Posterior vena cava (tissue), 2 donors: ENCODE measurements at regions of chrX and their contacts with region 1.

Region 1: GRCh38 chrX:109714340-109714958 is 18.6 kb downstream of the ACSL4 start:
- DNase-seq: no peak

Region 2: GRCh38 chrX:109782994-109783700 is 68.7 kb after region 1 on chrX:
- intact Hi-C with region 1: no loop called
- DNase-seq: no peak

Region 3: DNA sequence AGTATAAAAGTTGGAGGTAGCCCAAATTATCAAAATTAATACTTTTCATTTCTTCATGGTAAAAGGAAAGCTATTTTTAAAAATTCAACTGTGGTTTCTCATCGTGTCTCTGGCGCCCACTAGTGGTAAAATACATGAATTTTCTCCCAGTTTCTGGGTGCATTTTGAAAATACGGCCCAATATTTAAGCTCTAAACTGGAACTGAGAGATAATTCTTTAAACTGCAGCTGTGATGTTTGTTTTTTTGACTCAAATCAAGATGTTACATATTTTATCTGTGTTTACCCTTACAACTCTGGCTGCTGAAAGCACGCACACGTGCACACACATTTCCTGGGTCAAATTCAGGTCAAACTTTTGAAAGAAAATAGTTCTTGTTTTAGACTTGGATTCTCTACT is 142.5 kb after region 1 on chrX:
- intact Hi-C with region 1: loop called (anchors 10 kb)
- DNase-seq: no peak